ENCODE measurements at regions of chr4 and their contacts with region 1.

Region 1: GRCh38 chr4:166064721-166065120 is 191.7 kb downstream of the TLL1 start:
- DNase-seq: no peak
- ATAC-seq: no peak

Region 2: GRCh38 chr4:165512424-165512823 is 552.3 kb before region 1 on chr4:
- intact Hi-C with region 1: no loop called
- DNase-seq: no peak
- ATAC-seq: no peak

Region 3: DNA sequence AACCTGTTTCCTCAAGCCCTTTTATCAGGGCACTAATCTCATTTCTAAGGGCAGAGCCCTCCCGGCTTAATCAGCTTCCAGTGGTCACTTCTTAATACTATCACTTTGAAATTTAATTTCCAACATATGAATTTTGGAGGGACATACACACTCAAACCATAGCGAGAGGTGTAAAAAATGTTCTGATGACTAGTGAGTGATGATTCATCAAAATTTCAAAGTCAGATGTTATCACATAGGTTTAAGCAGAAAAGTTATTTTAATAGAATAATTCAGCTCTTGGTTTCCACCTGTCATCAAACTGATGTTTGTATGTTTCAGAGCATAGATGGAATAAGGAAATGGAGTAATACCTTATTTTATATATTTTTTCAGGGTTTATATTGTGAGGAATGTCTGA is 29.8 kb before region 1 on chr4:
- intact Hi-C with region 1: loop called (anchors 2 kb)
- DNase-seq: no peak
- ATAC-seq: no peak

Measured in sciatic nerve (tissue), 2 donors.